GM12878 (cell line): ENCODE measurements at regions of chr10 and their contacts with region 1.

Region 1: GRCh38 chr10:63720072-63720537 is 198.9 kb downstream of the REEP3 start:
- DNase-seq: peak; percentile 25
- ATAC-seq: peak; percentile 81
- H3K4me3 ChIP-seq: no peak overlapping the region
- H3K27ac ChIP-seq: no peak overlapping the region
- H3K4me1 ChIP-seq: no peaks in the 10 kb centered on the region
- H3K27me3 ChIP-seq: no peaks in the 10 kb centered on the region; a peak in 2 of 4 replicates
- CTCF ChIP-seq: peak; percentile 81 to 95 (median 92); a peak in 5 of 6 replicates
- EP300 ChIP-seq: no peak
- POLR2A ChIP-seq: no peak
- RAD21 ChIP-seq: peak; percentile 94

Region 2: DNA sequence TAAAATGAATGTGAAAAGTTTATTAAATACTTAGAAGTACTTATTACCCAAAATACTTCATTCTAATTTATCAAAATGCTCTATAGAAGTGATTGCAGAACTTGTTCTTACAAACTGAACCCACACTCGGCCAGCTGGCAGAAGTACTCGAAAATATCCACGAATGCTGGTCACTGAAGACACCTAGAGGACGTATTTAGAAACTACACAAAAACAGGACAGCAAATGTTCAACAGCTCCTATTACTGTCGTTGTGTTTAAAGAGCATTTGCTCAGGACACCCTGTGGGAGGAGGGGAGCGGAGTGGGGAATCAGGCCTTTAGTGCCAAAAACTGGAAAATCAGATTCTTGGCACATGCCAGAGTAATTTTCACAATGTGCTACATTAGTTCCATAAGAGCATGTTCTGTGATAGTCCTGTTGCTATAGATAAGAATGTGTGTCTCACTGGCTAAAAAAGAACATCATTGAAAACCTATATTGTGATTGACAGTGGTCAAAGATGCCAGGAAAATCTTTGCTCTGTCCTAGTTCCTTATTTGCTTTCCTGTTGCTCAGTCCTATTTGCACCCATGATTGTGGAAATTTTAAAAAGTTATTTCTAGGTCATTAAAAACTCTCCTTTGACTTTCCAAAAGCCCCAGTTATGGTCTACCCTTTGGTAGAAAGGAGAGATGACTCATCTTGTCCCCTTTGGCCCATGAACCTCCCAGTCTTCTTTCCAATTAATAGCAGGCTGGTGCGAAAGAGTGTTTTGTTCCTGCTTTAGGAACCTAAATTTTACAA is 636.0 kb before region 1 on chr10:
- CTCF ChIA-PET with region 1: interaction called, 13 read pairs
- POLR2A ChIA-PET with region 1: no interaction called
- RAD21 ChIA-PET with region 1: interaction called, 5 read pairs
- SMC1A ChIA-PET with region 1: interaction called, 9 read pairs
- in situ Hi-C with region 1: no loop called
- intact Hi-C with region 1: no loop called
- DNase-seq: peak; percentile 38
- ATAC-seq: peak; percentile 94
- H3K4me3 ChIP-seq: no peak overlapping the region
- H3K27ac ChIP-seq: no peak overlapping the region
- H3K4me1 ChIP-seq: no peaks in the 10 kb centered on the region
- H3K27me3 ChIP-seq: no peaks in the 10 kb centered on the region; a peak in 1 of 4 replicates
- CTCF ChIP-seq: peak; percentile 63 to 84 (median 76)
- EP300 ChIP-seq: no peak
- POLR2A ChIP-seq: no peak
- RAD21 ChIP-seq: peak; percentile 99

Region 3: GRCh38 chr10:63166742-63167258 is 553.3 kb before region 1 on chr10:
- CTCF ChIA-PET with region 1: interaction called, 521 read pairs
- POLR2A ChIA-PET with region 1: interaction called, 5 read pairs
- RAD21 ChIA-PET with region 1: interaction called, 241 read pairs
- SMC1A ChIA-PET with region 1: interaction called, 264 read pairs
- in situ Hi-C with region 1: no loop called
- intact Hi-C with region 1: loop called (anchors 1 kb)
- DNase-seq: peak; percentile 33
- ATAC-seq: peak; percentile 78
- H3K4me3 ChIP-seq: no peak overlapping the region
- H3K27ac ChIP-seq: no peak overlapping the region
- H3K4me1 ChIP-seq: no peaks in the 10 kb centered on the region
- H3K27me3 ChIP-seq: no peaks in the 10 kb centered on the region
- CTCF ChIP-seq: peak; percentile 63 to 72 (median 66)
- EP300 ChIP-seq: no peak
- POLR2A ChIP-seq: no peak
- RAD21 ChIP-seq: peak; percentile 80

Region 4: DNA sequence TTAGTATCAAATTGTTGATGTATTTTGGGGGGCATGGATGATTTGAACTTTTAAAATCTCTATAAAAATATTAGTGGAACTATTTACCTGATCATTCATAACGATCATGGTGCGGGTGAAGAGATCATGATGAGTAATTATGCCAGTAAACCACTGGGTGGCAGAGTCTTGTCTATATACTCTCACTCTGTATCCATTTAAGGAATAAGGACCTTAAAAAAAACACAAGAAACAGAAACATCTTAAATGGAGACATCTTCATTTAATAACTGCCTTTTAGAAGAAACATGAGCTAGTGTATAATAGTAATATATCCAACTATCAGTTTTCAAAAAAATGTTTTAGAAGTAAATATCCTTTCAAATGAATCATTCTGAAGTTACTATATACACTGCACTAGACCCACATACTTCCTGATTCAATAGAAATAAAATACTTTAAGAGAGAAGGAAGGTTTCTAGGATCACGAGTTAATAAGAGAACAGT is 502.9 kb before region 1 on chr10:
- CTCF ChIA-PET with region 1: interaction called, 53 read pairs
- POLR2A ChIA-PET with region 1: no interaction called
- RAD21 ChIA-PET with region 1: interaction called, 21 read pairs
- SMC1A ChIA-PET with region 1: interaction called, 59 read pairs
- in situ Hi-C with region 1: no loop called
- intact Hi-C with region 1: loop called (anchors 1 kb)
- DNase-seq: no peak
- ATAC-seq: peak; percentile 86
- H3K4me3 ChIP-seq: no peak overlapping the region
- H3K27ac ChIP-seq: peak overlapping the region; percentile 39; the same call in 1 of the 2 replicates
- H3K4me1 ChIP-seq: peaks cover 5% of the 10 kb centered on the region; the same call in 1 of the 2 replicates
- H3K27me3 ChIP-seq: no peaks in the 10 kb centered on the region
- CTCF ChIP-seq: peak; percentile 43 to 67 (median 47); a peak in 5 of 6 replicates
- EP300 ChIP-seq: no peak
- POLR2A ChIP-seq: no peak
- RAD21 ChIP-seq: peak; percentile 76

Region 5: DNA sequence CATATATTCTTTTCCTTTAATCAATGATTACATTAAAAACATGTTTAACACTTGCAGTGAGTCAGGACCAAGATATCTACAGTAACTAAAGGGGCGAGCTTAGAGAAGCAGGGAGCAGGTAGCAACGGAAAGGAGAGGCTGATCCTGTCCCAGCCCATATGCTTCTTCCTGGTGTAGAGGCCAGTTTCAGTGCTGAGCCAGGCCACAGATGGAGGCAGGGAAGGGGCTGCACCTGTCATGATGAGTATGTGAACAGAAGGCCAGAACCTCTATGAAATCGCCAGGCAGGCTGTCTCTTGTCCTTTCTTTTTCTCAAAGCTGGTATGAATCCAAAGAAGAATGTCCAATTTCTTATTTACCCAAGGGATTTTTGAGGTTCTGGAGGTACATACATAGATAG is 182.6 kb before region 1 on chr10:
- CTCF ChIA-PET with region 1: interaction called, 4 read pairs
- POLR2A ChIA-PET with region 1: no interaction called
- RAD21 ChIA-PET with region 1: interaction called, 6 read pairs
- SMC1A ChIA-PET with region 1: interaction called, 3 read pairs
- in situ Hi-C with region 1: no loop called
- intact Hi-C with region 1: loop called (anchors 10 kb)
- DNase-seq: no peak
- ATAC-seq: no peak
- H3K4me3 ChIP-seq: no peak overlapping the region
- H3K27ac ChIP-seq: no peak overlapping the region
- H3K4me1 ChIP-seq: no peaks in the 10 kb centered on the region
- H3K27me3 ChIP-seq: no peaks in the 10 kb centered on the region
- CTCF ChIP-seq: no peak
- EP300 ChIP-seq: no peak
- POLR2A ChIP-seq: no peak
- RAD21 ChIP-seq: no peak

Region 6: GRCh38 chr10:63636812-63637211 is 83.3 kb before region 1 on chr10:
- CTCF ChIA-PET with region 1: interaction called, 149 read pairs
- POLR2A ChIA-PET with region 1: no interaction called
- RAD21 ChIA-PET with region 1: interaction called, 96 read pairs
- SMC1A ChIA-PET with region 1: interaction called, 50 read pairs
- in situ Hi-C with region 1: no loop called
- intact Hi-C with region 1: no loop called
- DNase-seq: no peak
- ATAC-seq: peak; percentile 86
- H3K4me3 ChIP-seq: no peak overlapping the region
- H3K27ac ChIP-seq: no peak overlapping the region
- H3K4me1 ChIP-seq: no peaks in the 10 kb centered on the region; the same call in 1 of the 2 replicates
- H3K27me3 ChIP-seq: no peaks in the 10 kb centered on the region
- CTCF ChIP-seq: no peak
- EP300 ChIP-seq: no peak
- POLR2A ChIP-seq: no peak
- RAD21 ChIP-seq: no peak

Region 7: GRCh38 chr10:63738410-63738809 is 18.3 kb after region 1 on chr10:
- CTCF ChIA-PET with region 1: interaction called, 4 read pairs
- POLR2A ChIA-PET with region 1: no interaction called
- RAD21 ChIA-PET with region 1: interaction called, 3 read pairs
- SMC1A ChIA-PET with region 1: interaction called, 11 read pairs
- in situ Hi-C with region 1: no loop called
- intact Hi-C with region 1: no loop called
- DNase-seq: no peak
- ATAC-seq: no peak
- H3K4me3 ChIP-seq: no peak overlapping the region
- H3K27ac ChIP-seq: no peak overlapping the region
- H3K4me1 ChIP-seq: no peaks in the 10 kb centered on the region
- H3K27me3 ChIP-seq: no peaks in the 10 kb centered on the region; a peak in 1 of 4 replicates
- CTCF ChIP-seq: no peak
- EP300 ChIP-seq: no peak
- POLR2A ChIP-seq: no peak
- RAD21 ChIP-seq: no peak

Region 8: GRCh38 chr10:64574374-64574773 is 854.3 kb after region 1 on chr10:
- CTCF ChIA-PET with region 1: no interaction called
- POLR2A ChIA-PET with region 1: no interaction called
- RAD21 ChIA-PET with region 1: no interaction called
- SMC1A ChIA-PET with region 1: no interaction called
- in situ Hi-C with region 1: no loop called
- intact Hi-C with region 1: no loop called
- DNase-seq: no peak
- ATAC-seq: no peak
- H3K4me3 ChIP-seq: no peak overlapping the region
- H3K27ac ChIP-seq: no peak overlapping the region
- H3K4me1 ChIP-seq: no peaks in the 10 kb centered on the region
- H3K27me3 ChIP-seq: no peaks in the 10 kb centered on the region
- CTCF ChIP-seq: no peak
- EP300 ChIP-seq: no peak
- POLR2A ChIP-seq: no peak
- RAD21 ChIP-seq: no peak